GM18951 (cell line): ENCODE measurements at regions of chr1 and their contacts with region 1.

Region 1: DNA sequence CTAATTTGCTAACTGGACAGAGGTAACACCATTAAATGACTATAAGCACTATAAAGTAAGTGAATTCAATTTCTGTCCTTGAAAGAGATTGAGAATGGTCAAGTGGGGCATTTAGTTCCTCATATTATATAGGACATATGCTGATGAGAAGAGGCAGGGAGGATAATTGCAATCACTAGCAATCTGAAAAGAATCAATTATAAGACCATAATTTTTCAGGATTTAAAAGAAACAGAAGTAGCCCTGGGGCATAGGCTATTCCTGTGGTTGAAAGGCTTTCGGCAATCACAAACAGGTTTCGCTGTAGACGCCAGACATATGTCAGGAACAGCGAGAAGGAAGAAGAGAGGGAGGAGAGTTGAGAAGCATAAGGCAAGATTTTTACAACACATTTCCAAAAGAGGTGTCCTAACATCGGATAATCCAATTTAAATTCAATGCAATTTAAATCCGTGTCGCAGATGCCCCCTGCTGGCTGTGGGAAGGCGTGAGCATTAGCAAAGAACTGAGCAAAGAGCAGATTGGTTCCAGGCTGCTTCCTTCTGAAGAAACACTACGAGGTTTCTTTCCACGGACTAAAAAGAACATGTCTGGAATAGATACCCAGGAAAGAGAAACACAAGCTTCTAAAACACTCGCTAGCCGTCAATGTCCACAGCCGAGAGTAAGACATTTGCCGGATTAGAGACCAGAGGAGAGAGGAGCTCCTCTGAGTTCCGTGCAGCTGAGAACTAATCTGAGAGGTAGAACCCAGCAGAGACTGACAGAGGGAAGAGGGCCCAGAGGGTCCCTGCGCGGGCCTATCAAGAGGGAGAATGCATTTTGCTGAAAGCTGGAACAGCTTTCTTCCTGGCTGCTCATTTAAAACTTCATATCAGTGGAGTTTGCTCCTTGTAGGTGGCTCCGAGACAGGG is 27.9 kb downstream of the RGS5 start:
- POLR2A ChIP-seq: no peak

Region 2: GRCh38 chr1:162854245-162854882 is 320.4 kb before region 1 on chr1:
- in situ Hi-C with region 1: loop called (anchors 25 kb)
- POLR2A ChIP-seq: no peak